AG04450 (cell line): ENCODE measurements at regions of chr12 and their contacts with region 1.

Region 1: DNA sequence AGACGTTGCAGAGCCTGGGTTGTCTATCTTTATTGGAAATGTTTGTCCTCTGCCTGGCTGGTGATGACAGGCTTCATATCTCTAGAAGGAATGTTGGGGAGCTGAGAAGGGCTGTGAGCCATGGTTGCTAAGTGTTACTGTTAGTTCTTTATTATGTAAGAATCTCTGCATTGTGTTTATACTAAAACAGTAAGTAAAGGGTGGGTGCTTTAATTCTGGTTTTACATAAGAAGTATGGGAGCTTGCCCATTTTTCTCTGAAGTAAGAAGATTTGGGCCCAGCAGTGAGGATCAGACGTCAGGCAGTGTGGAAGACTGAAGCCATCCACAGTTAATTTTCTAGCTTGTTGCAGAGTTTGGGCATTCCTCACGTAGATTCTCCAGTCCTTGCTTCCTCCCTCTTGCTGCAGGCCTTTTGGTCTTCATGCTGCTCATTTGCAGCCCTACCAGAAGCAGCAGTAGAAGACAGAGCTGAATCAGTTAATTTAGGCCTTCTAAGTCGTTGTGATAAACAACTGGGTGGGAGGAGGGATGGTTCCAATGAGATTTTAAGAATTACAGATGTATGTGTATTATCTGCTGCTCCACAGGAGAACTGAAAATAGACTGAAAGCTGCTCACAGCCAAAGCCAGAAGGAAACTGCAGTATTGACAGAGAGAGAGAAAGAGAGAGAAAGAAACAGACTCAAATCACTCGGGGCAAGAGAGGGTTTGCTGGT is 21.4 kb downstream of the WNT5B start:
- DNase-seq: no peak
- H3K4me3 ChIP-seq: no peak overlapping the region
- H3K27ac ChIP-seq: no peak overlapping the region
- H3K27me3 ChIP-seq: no peaks in the 10 kb centered on the region
- CTCF ChIP-seq: no peak

Region 2: GRCh38 chr12:1680804-1681492 is 30.5 kb after region 1 on chr12:
- CTCF ChIA-PET with region 1: interaction called, 14 read pairs
- POLR2A ChIA-PET with region 1: no interaction called
- DNase-seq: no peak
- H3K4me3 ChIP-seq: no peak overlapping the region
- H3K27ac ChIP-seq: no peak overlapping the region
- H3K27me3 ChIP-seq: no peaks in the 10 kb centered on the region
- CTCF ChIP-seq: no peak

Region 3: DNA sequence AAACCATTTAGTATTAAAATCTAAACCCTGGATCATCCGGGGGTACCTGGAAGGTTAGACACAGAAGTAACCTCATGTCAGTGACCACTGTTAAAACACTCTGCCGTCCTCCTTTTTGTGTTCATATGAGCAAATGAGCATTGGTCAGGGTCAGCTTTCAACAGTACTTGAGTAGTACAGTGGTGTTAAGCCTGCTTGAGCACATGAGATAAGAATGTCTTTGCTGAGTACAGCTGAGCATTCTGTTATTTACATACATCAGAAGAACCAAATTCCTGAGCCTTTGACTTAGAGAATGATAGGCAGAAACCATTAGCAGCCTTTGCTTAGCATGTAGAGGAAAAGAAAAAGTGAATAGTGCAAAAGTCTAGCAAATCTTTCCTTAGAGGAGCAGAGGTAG is 131.4 kb after region 1 on chr12:
- CTCF ChIA-PET with region 1: interaction called, 13 read pairs
- POLR2A ChIA-PET with region 1: no interaction called
- DNase-seq: peak; percentile 62
- H3K4me3 ChIP-seq: no peak overlapping the region
- H3K27ac ChIP-seq: no peak overlapping the region
- H3K27me3 ChIP-seq: no peaks in the 10 kb centered on the region
- CTCF ChIP-seq: no peak

Region 4: GRCh38 chr12:1820191-1820895 is 169.9 kb after region 1 on chr12 and contains the start of gene LRTM2:
- CTCF ChIA-PET with region 1: interaction called, 12 read pairs
- POLR2A ChIA-PET with region 1: no interaction called
- DNase-seq: no peak
- H3K4me3 ChIP-seq: no peak within 1 kb of the TSS
- H3K27ac ChIP-seq: no peak within 1 kb of the TSS
- H3K27me3 ChIP-seq: peaks cover 80% of the 10 kb centered on the region
- CTCF ChIP-seq: no peak
- polyA plus RNA-seq, gene LRTM2: not detected in 2 replicates